PC-9 (cell line): ENCODE measurements at regions of chr11 and their contacts with region 1.

Region 1: DNA sequence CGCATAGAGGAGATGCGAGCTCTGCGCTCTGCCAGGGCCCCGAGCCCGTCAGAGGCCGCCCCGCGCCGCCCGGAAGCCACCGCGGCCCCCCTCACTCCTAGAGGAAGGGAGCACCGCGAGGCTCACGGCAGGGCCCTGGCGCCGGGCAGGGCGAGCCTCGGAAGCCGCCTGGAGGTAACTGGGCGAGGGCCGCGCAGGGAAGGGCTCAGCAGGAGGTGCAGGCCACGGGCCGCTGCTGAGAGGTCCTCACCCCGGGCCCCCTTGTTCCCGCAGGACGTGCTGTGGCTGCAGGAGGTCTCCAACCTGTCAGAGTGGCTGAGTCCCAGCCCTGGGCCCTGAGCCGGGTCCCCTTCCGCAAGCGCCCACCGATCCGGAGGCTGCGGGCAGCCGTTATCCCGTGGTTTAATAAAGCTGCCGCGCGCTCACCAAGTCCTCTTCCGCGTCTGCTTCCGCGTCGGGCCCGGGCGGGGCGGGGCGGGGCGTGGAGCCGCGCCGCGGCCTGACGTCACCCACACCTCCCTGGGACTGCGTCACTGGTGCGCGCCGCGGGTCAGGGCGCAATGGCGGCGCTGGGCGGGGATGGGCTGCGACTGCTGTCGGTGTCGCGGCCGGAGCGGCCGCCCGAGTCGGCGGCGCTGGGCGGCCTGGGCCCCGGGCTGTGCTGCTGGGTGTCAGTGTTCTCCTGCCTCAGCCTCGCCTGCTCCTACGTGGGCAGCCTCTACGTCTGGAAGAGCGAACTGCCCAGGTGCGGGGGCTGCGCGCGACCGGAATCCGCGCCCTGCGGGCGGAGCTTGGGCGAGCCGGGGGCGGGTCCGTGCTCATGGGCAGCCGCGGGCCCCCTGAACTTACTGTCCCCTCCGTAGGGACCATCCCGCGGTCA is at the start of gene RCE1:
- DNase-seq: peak; percentile 79 to 93
- H3K4me3 ChIP-seq: peak within 1 kb of the TSS; percentile 94
- H3K27ac ChIP-seq: peak within 1 kb of the TSS; percentile 67
- H3K4me1 ChIP-seq: peaks cover 52% of the 10 kb centered on the region
- H3K27me3 ChIP-seq: no peaks in the 10 kb centered on the region
- CTCF ChIP-seq: no peak
- total RNA-seq, gene RCE1: 42.1 and 42.9 TPM in 2 replicates

Region 2: DNA sequence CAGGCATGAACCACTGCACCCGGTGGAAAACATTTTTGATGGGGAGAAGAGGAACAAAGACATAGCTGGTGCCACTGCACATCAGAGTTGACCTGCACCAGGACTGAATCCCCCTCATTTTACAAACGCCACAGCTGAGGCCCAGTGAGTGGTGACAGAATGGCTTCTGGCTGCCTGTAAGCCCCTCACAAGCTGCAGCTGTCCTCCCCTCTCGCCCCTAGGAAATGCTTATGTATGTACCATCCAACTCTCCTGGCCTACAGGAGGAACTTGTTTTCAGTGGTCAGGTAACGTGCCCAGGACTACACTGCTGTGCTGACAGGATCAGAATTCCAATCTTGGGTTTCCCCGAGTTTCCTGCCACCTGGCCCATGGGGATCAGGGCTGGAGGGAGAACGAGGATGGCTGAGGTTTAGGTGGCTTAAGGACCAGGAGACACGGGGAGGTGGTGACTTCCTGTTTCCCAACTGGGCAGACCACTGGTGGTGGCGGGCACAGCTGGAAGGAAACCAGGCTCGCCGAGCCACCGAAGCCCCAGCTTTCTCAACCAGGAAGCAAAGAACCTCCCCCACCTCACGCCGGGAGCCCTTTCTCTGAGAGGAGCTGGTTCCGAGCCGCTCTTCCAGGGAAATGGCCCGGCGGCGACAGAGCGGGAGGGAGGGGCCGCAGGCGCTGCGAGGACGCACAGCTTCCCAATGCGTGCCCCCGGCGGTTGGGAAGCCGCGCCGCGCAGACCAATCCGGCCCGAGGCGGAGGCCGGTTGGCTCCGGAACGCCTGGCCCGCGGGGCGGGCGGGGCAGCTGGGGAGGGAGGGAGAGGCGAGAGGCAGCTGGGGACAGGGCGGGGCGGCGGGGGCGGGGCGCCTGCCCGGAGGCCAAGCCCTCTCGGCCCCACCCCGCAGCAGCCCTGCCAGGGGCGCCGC is 12.7 kb after region 1 on chr11:
- CTCF ChIA-PET with region 1: interaction called, 9 read pairs
- POLR2A ChIA-PET with region 1: interaction called, 13 read pairs
- intact Hi-C with region 1: no loop called
- DNase-seq: peak; percentile 80 to 98
- H3K4me3 ChIP-seq: peak overlapping the region; percentile 99
- H3K27ac ChIP-seq: peak overlapping the region; percentile 33
- H3K4me1 ChIP-seq: peaks cover 13% of the 10 kb centered on the region
- H3K27me3 ChIP-seq: no peaks in the 10 kb centered on the region
- CTCF ChIP-seq: no peak

Region 3: DNA sequence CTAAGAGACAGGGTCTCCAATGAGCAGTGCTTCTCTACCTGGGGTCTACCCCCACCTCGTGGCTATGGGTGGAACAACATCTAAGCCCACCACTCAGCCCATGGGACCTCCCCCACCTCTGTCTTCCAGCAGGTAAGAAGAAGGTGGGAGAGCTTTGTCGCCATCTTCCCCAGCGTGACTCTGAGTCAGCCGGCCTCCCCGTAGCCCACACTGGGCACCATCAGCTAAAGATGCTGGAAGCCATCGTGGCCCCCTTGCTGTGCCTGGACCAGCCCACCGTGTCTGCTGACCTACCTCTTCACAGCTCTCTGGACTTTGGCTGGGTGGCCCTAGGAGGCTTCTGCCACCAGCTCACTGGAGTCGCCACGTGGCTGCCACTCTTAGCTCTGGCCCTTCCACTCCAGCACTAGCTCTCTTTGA is 132.9 kb after region 1 on chr11:
- CTCF ChIA-PET with region 1: no interaction called
- POLR2A ChIA-PET with region 1: no interaction called
- intact Hi-C with region 1: loop called (anchors 5 kb)
- DNase-seq: peak in 1 of 2 experiments; percentile 41
- H3K4me3 ChIP-seq: no peak overlapping the region
- H3K27ac ChIP-seq: no peak overlapping the region
- H3K4me1 ChIP-seq: peaks cover 47% of the 10 kb centered on the region
- H3K27me3 ChIP-seq: no peaks in the 10 kb centered on the region
- CTCF ChIP-seq: peak; percentile 91

Region 4: GRCh38 chr11:67022328-67022927 is 179.3 kb after region 1 on chr11:
- CTCF ChIA-PET with region 1: interaction called, 4 read pairs
- POLR2A ChIA-PET with region 1: interaction called, 4 read pairs
- intact Hi-C with region 1: loop called (anchors 2 kb)
- DNase-seq: peak; percentile 86 to 95
- H3K4me3 ChIP-seq: peak overlapping the region; percentile 80
- H3K27ac ChIP-seq: peak overlapping the region; percentile 50
- H3K4me1 ChIP-seq: peaks cover 44% of the 10 kb centered on the region
- H3K27me3 ChIP-seq: no peaks in the 10 kb centered on the region
- CTCF ChIP-seq: no peak